ENCODE measurements at regions of chr17 and their contacts with region 1.

Region 1: GRCh38 chr17:71338396-71338795 is 782.4 kb upstream of the SOX9 start:
- DNase-seq: no peak
- H3K4me3 ChIP-seq: no peak overlapping the region
- H3K27ac ChIP-seq: no peak overlapping the region
- H3K4me1 ChIP-seq: no peaks in the 10 kb centered on the region
- H3K27me3 ChIP-seq: no peaks in the 10 kb centered on the region
- CTCF ChIP-seq: no peak

Region 2: DNA sequence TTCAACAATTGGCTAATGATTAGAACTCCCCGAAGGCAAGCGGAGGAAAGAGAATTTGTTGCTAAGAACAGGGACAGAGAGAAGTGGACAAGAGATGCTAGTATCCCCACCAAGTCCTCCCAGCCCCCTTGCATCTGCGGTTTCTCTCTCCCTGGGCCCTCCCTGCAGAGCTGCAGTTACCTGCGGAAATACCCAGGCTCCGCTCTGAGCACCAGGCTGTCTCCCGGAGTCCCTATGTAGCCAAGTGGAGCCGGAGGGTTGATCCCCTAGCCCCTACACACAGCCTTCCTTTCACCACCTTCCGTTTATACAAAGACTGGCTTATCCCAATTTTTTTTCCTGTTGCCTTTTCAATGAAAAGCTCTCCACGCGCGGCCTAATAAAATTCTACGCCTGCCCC is 334.7 kb before region 1 on chr17:
- CTCF ChIA-PET with region 1: no interaction called
- POLR2A ChIA-PET with region 1: no interaction called
- intact Hi-C with region 1: no loop called
- DNase-seq: no peak
- H3K4me3 ChIP-seq: no peak overlapping the region
- H3K27ac ChIP-seq: no peak overlapping the region
- H3K4me1 ChIP-seq: no peaks in the 10 kb centered on the region
- H3K27me3 ChIP-seq: no peaks in the 10 kb centered on the region
- CTCF ChIP-seq: no peak

Region 3: DNA sequence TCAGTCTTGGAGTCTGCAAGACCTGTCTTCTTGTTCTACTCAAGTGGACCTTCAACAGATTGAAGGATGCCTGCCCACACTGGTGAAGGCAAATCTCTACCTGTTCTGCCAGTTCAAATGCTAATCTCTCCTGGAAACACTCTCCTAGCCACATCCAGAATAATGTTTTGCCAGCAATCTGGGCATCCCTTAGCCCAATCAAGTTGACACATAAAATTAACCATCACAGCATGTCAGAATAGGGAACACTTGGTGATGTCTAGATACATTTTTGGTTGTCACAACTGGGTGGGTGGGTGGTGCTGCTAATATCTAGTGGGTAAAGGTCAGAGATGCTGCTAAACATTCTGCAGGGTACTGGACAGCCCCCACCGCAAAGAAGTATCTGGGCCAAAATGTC is 37.6 kb after region 1 on chr17:
- CTCF ChIA-PET with region 1: no interaction called
- POLR2A ChIA-PET with region 1: interaction called, 13 read pairs
- intact Hi-C with region 1: no loop called
- DNase-seq: no peak
- H3K4me3 ChIP-seq: no peak overlapping the region
- H3K27ac ChIP-seq: no peak overlapping the region
- H3K4me1 ChIP-seq: no peaks in the 10 kb centered on the region
- H3K27me3 ChIP-seq: no peaks in the 10 kb centered on the region
- CTCF ChIP-seq: no peak

Measured in PC-9 (cell line).